H1 (cell line): ENCODE measurements at regions of chr19 and their contacts with region 1.

Region 1: GRCh38 chr19:21328885-21329605 is at the start of gene ZNF708:
- DNase-seq: peak; percentile 80 to 83
- H3K4me3 ChIP-seq: peak within 1 kb of the TSS; percentile 89 to 98 (median 95)
- H3K27ac ChIP-seq: peak within 1 kb of the TSS; percentile 98
- H3K4me1 ChIP-seq: peaks cover 0 to 4% (median 0%) of the 10 kb centered on the region in 4 experiments; a peak in 2 of 7 replicates
- H3K27me3 ChIP-seq: no peaks in the 10 kb centered on the region
- CTCF ChIP-seq: no peak
- EP300 ChIP-seq: no peak
- POLR2A ChIP-seq: peak; percentile 90 to 99
- RAD21 ChIP-seq: no peak
- total RNA-seq, gene ZNF708: 40.0 and 41.5 TPM in 2 replicates

Region 2: DNA sequence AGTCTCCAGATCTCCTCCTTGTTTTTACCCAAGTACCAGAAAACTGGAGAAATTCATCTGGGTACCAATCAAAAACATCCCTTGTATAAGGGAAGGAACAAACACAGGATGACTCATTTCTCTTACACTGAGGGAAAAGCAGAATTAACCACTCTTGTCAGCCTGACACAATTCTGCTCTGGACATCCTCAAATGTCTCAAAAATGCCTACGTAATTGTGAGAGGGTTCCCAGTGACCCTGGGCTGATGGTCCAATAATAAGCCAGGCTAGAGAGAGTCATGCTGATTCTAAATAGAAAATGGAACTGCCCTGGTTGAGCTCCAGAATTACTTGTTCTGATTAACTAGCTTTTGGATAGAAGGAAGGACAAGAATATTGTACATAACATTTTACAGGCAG is 14.4 kb before region 1 on chr19:
- CTCF ChIA-PET with region 1: interaction called, 6 read pairs
- POLR2A ChIA-PET with region 1: interaction called, 37 read pairs
- DNase-seq: no peak
- H3K4me3 ChIP-seq: no peak overlapping the region
- H3K27ac ChIP-seq: no peak overlapping the region
- H3K4me1 ChIP-seq: peaks cover 0 to 4% (median 2%) of the 10 kb centered on the region in 4 experiments; a peak in 3 of 7 replicates
- H3K27me3 ChIP-seq: no peaks in the 10 kb centered on the region; a peak in 1 of 7 replicates
- CTCF ChIP-seq: no peak
- EP300 ChIP-seq: no peak
- POLR2A ChIP-seq: no peak
- RAD21 ChIP-seq: no peak

Region 3: GRCh38 chr19:21463449-21464105 is 134.5 kb after region 1 on chr19:
- CTCF ChIA-PET with region 1: interaction called, 5 read pairs
- POLR2A ChIA-PET with region 1: interaction called, 13 read pairs
- DNase-seq: peak; percentile 75 to 81
- H3K4me3 ChIP-seq: peak overlapping the region; percentile 91 to 100 (median 96)
- H3K27ac ChIP-seq: peak overlapping the region; percentile 85
- H3K4me1 ChIP-seq: no peaks in the 10 kb centered on the region; a peak in 1 of 7 replicates
- H3K27me3 ChIP-seq: no peaks in the 10 kb centered on the region
- CTCF ChIP-seq: no peak
- EP300 ChIP-seq: no peak
- POLR2A ChIP-seq: peak; percentile 90 to 99
- RAD21 ChIP-seq: no peak